ENCODE measurements at regions of chr14 and their contacts with region 1.

Region 1: DNA sequence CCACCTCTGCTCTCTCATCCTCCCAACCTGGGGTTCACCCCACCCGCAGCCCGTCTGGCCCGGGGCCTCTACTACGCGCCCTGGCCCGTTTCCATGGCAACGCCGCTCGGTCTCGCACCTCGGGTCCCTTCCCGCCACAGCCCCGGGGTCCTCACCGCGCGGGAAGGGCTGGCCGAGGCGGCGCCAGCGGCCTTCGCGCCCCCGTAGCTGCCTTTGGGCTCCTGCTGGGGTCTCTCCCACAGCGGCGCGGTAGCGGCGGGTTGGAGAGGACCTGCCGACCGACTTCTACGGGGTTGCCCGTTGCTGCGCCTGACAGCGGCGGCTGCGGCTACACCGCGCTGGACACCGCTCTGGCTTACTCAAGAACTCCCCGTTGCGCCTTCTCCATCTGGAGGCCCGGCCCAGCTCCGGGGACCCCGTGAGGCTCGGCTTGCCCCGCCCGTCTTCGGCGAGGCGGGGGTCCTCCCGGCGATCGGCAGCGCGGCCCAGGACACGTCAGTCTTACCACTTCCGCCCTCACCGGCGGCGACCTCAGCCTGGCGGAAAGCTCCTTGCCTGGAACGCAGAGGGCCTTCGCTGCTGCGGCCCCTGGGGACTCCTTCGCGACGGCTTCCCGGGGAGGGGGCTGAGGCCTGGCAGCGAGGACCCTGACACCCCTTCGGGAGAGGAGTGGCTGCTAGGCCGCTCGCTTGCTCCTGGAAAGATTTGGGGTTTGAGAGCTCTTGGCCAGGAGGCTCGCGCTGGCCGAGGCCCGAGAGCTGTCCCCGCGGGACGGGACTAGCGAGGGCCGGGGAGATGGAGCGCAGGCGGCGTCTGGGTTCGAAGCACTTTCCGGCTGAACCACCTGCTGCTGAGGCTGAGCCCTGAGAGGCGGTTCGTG is at the start of gene TM9SF1:
- DNase-seq: peak; percentile 92 to 95
- ATAC-seq: peak; percentile 82 to 92 (median 84)
- H3K4me3 ChIP-seq: peak within 1 kb of the TSS; percentile 92
- H3K4me3 Mint-ChIP-seq: peak within 1 kb of the TSS; percentile 85
- H3K27ac ChIP-seq: peak within 1 kb of the TSS; percentile 99
- H3K27ac Mint-ChIP-seq: peak within 1 kb of the TSS; percentile 91 to 96
- H3K4me1 ChIP-seq: peaks cover 30% of the 10 kb centered on the region
- H3K4me1 Mint-ChIP-seq: peaks cover 42 to 52% of the 10 kb centered on the region in 2 donors
- H3K27me3 ChIP-seq: no peaks in the 10 kb centered on the region
- H3K27me3 Mint-ChIP-seq: no peaks in the 10 kb centered on the region
- CTCF ChIP-seq: no peak
- total RNA-seq, gene TM9SF1: 15.2 to 32.1 (median 28.7) TPM

Region 2: GRCh38 chr14:24219080-24219479 is 23.6 kb after region 1 on chr14:
- intact Hi-C with region 1: no loop called
- DNase-seq: no peak
- ATAC-seq: no peak
- H3K4me3 ChIP-seq: no peak overlapping the region
- H3K4me3 Mint-ChIP-seq: no peak overlapping the region
- H3K27ac ChIP-seq: no peak overlapping the region
- H3K27ac Mint-ChIP-seq: no peak overlapping the region
- H3K4me1 ChIP-seq: peaks cover 17% of the 10 kb centered on the region
- H3K4me1 Mint-ChIP-seq: peaks cover 24 to 25% of the 10 kb centered on the region in 2 donors
- H3K27me3 ChIP-seq: no peaks in the 10 kb centered on the region
- H3K27me3 Mint-ChIP-seq: no peaks in the 10 kb centered on the region
- CTCF ChIP-seq: no peak

Region 3: GRCh38 chr14:24232121-24232644 is 36.8 kb after region 1 on chr14 and contains the start of gene NEDD8:
- intact Hi-C with region 1: loop called (anchors 5 kb)
- DNase-seq: peak; percentile 78 to 92
- ATAC-seq: peak; percentile 88 to 91 (median 90)
- H3K4me3 ChIP-seq: peak within 1 kb of the TSS; percentile 71
- H3K4me3 Mint-ChIP-seq: peak within 1 kb of the TSS; percentile 86
- H3K27ac ChIP-seq: peak within 1 kb of the TSS; percentile 77
- H3K27ac Mint-ChIP-seq: peak within 1 kb of the TSS; percentile 87 to 100
- H3K4me1 ChIP-seq: peaks cover 24% of the 10 kb centered on the region
- H3K4me1 Mint-ChIP-seq: peaks cover 46 to 55% of the 10 kb centered on the region in 2 donors
- H3K27me3 ChIP-seq: no peaks in the 10 kb centered on the region
- H3K27me3 Mint-ChIP-seq: no peaks in the 10 kb centered on the region
- CTCF ChIP-seq: no peak
- total RNA-seq, gene NEDD8: 93.6 to 109 (median 95.9) TPM

Measured in natural killer cell (primary cell).